Activated CD4-positive, alpha-beta T cell treated with anti-CD3 and anti-CD28 coated beads for 36 hours (primary cell): ENCODE measurements at regions of chr15 and their contacts with region 1.

Region 1: DNA sequence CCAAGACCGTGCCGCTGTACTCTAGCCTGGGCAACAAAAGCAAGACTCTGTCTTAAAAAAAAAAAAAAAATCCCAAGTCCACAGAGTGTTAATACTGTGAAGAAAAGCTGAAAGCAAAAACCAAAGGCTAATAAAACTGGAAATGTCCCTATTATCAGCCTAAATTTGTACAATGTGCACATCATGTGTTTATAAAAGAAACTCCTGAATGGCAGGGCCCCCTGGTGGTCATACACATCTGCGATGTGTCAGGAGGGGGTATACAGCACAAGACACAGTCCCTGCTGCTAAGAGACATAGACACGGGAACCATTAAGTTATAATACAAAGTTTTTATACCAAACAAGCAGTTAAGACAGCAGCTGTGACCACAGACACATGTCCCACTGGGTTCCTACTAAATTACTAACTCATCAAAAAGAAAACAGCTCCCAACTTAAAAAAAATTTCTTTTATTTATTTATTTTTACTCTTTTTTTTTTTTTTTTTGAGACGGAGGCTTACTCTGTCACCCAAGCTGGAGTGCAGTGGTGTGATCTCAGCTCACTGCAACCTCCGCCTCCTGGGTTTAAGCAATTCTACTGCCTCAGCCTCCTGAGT is 31.0 kb downstream of the IDH2 start:
- DNase-seq: peak; percentile 90
- ATAC-seq: peak; percentile 88
- H3K4me3 Mint-ChIP-seq: no peak overlapping the region
- H3K27ac Mint-ChIP-seq: peak overlapping the region; percentile 47
- H3K4me1 Mint-ChIP-seq: peaks cover 21% of the 10 kb centered on the region
- H3K27me3 Mint-ChIP-seq: no peaks in the 10 kb centered on the region

Region 2: GRCh38 chr15:89760303-89761008 is 310.9 kb before region 1 on chr15:
- CTCF ChIA-PET with region 1: no interaction called
- POLR2A ChIA-PET with region 1: no interaction called
- intact Hi-C with region 1: loop called (anchors 1 to 5 kb)
- DNase-seq: peak; percentile 85
- ATAC-seq: peak; percentile 88
- H3K4me3 Mint-ChIP-seq: no peak overlapping the region
- H3K27ac Mint-ChIP-seq: no peak overlapping the region
- H3K4me1 Mint-ChIP-seq: no peaks in the 10 kb centered on the region
- H3K27me3 Mint-ChIP-seq: peaks cover 6% of the 10 kb centered on the region

Region 3: DNA sequence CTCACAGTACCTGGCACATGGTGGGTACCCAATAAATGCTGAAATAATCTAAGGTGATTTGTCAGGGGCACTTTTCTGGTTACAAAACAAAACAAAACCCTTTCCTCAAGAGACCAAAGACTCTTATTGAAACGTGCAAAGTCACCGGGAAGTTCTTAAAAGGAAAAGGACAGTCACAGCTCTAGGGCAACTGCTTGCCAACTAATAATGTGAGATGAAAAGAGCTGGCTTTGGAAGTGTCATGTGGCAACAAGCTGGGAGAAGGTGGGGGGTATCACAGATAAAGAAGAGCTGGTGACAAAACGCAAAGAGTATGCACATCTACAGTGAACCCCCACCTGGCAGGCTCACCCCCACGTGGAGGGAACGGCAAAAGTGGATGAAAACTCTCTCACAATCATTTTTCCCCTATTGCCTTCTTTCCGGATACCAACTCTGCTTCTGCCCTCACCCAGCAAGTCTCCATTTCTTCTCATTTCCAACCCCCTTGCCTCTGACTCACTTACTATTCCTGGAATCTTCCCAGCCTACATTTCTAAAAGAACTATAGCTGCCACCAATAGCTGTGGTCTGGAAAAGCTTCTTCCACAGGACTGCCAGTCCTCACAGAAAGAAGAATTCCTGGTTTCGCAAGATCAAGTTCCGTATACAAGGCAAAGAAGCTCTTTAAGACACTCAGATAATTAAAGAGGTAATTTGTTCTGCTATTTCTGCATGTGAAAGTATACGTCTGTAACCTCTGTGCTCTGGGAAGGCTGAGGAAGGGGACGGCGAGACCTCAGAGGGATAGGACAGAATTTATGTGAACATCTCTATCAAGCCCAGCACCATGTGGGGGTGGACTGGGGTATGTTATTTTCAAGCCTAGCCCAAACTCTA is 234.8 kb before region 1 on chr15:
- CTCF ChIA-PET with region 1: no interaction called
- POLR2A ChIA-PET with region 1: no interaction called
- intact Hi-C with region 1: no loop called
- DNase-seq: no peak
- ATAC-seq: no peak
- H3K4me3 Mint-ChIP-seq: no peak overlapping the region
- H3K27ac Mint-ChIP-seq: no peak overlapping the region
- H3K4me1 Mint-ChIP-seq: peaks cover 3% of the 10 kb centered on the region
- H3K27me3 Mint-ChIP-seq: no peaks in the 10 kb centered on the region

Region 4: DNA sequence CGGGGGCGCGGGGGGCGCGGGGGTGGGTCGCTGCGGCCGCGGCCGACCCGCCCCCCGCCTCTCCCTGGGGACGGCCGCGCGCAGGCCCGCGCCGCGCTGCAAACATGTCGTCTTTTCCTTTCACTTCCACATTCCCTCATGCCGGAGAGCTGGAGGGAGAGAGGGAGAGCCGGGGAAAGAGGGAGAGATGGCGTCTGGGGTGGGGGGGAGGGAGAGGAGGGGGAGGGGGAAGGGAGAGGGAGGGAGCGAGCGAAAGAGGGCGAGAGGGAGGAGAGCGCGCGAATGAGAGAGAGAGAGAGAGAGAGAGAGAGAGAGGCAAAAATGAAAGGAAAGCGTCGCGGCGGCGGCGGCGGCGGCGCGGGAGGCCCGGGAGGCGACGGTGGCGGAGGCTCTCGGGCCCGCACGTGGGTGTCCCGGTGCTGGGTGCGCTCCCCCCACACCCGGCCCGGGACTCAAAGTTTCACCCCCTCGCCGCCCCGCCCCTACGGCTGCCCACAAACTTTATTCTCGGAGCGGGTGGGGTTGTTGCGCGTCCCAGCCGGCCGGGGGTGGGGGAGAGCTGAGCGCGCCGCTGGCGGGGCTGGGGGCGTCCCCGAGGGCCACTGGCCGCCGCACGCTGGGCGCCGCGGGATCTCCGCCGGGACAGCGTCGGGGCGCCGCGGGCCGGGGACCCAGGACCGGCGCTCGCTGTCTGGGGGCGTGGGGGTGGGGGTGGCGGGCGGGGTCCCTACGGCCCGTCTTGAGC is 69.5 kb before region 1 on chr15:
- CTCF ChIA-PET with region 1: interaction called, 4 read pairs
- POLR2A ChIA-PET with region 1: interaction called, 4 read pairs
- intact Hi-C with region 1: loop called (anchors 2 to 5 kb)
- DNase-seq: peak; percentile 77
- ATAC-seq: peak; percentile 27
- H3K4me3 Mint-ChIP-seq: peak overlapping the region; percentile 82
- H3K27ac Mint-ChIP-seq: peak overlapping the region; percentile 88
- H3K4me1 Mint-ChIP-seq: peaks cover 61% of the 10 kb centered on the region
- H3K27me3 Mint-ChIP-seq: no peaks in the 10 kb centered on the region

Region 5: DNA sequence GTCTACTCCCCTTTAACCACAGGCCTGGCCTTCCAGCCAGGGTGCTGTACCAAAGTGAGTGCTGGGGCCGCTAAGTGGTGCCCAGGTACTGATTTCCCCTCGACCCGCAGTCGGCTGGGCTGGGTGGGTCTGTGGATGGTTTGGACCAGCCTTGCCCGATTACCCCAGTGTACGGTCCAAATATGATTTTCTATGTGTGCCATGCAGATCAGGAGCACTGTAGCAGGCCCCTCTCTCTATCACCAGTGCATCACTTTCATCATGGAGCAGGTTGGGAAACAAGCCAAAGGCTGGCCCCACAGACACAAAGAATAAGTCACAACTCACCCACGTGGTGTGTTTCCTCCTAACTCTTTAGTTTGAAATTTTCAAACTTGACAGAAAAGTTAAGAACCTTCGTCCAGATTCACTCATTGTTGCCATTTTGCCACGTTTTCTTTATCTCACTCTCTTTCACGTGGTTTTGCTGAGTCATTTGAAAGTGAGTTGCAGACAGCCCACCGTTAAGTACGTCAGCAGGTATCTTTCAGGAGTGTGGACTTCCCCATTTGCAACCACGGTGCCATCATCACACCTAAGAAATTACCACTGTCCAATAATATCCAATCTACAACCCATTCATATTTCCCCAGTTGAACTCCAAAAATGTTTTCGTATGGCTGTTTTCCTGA is 33.2 kb before region 1 on chr15:
- CTCF ChIA-PET with region 1: interaction called, 7 read pairs
- POLR2A ChIA-PET with region 1: no interaction called
- intact Hi-C with region 1: loop called in 1 of 2 experiments (anchors 1 kb)
- DNase-seq: peak; percentile 82
- ATAC-seq: peak; percentile 82
- H3K4me3 Mint-ChIP-seq: peak overlapping the region; percentile 6
- H3K27ac Mint-ChIP-seq: peak overlapping the region; percentile 95
- H3K4me1 Mint-ChIP-seq: peaks cover 79% of the 10 kb centered on the region
- H3K27me3 Mint-ChIP-seq: no peaks in the 10 kb centered on the region

Region 6: GRCh38 chr15:90086868-90087268 is 15.6 kb after region 1 on chr15:
- CTCF ChIA-PET with region 1: interaction called, 12 read pairs
- POLR2A ChIA-PET with region 1: interaction called, 5 read pairs
- intact Hi-C with region 1: no loop called
- DNase-seq: peak; percentile 75
- ATAC-seq: peak; percentile 79
- H3K4me3 Mint-ChIP-seq: no peak overlapping the region
- H3K27ac Mint-ChIP-seq: peak overlapping the region; percentile 75
- H3K4me1 Mint-ChIP-seq: peaks cover 6% of the 10 kb centered on the region
- H3K27me3 Mint-ChIP-seq: no peaks in the 10 kb centered on the region